ENCODE measurements at regions of chr5 and their contacts with region 1.

Region 1: DNA sequence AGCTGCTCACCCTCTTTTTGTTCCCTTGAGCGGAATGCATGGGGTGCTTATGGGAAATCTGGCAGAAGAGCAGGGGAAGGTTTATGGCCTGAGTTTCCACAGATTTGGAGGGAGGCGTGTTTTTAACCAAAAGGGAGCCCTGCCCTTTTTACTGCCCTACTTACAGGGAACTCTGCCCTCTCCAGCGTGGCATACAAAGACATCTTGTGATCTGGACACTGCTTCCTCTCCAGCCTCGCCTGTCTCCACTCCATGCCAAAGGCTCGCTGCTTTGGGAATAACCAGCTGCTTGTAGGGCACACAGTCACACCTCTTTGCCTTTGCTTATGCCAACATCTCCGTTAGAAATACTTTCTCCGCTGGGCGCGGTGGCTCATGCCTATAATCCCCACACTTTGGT is 314.2 kb downstream of the ARHGAP26 start:
- DNase-seq: no peak
- H3K4me3 ChIP-seq: no peak overlapping the region
- H3K27ac ChIP-seq: no peak overlapping the region
- H3K27me3 ChIP-seq: no peaks in the 10 kb centered on the region
- CTCF ChIP-seq: no peak

Region 2: DNA sequence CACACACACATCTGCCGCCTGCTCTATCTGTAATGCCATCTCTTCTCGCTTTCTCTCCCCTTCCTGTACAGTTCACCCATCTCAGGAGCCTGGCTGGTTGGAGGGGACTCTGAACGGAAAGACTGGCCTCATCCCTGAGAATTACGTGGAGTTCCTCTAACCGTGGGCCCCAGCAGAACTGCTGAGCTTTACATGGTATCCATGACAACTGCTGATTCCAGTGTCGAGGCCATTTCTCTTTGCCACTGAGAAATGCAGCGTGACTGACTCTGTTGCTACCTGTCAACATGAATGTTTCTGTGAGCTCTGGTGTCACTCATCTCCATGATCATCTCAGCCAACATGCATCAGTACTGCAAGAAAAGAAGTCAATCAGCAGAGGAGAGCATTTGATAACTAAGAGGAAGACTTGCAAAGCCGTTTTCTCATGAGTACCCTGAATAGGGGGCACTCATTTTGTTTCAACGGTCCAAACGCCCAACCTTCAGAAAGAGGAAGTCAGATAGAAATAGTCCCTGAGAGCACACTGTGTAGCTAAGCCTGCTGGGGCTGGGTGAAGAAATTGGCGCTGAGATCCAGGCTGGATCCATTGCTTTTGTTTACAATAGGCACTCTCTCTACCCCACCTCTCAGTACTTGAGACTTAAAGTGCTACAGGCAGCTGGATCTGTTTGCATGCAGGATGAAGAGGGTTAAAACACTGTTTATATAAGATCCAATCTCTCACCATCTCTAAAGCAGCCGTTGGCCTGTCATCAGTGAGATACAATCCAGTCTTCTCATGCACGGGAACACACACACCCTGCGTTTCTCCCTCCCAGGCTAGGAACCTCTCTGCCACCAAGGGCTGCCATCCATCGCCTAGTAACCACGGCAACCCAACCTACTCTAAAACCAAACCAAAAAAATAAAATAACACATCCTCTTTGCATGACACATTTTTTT is 138.2 kb after region 1 on chr5:
- CTCF ChIA-PET with region 1: no interaction called
- POLR2A ChIA-PET with region 1: interaction called, 14 read pairs
- DNase-seq: no peak
- H3K4me3 ChIP-seq: no peak overlapping the region
- H3K27ac ChIP-seq: no peak overlapping the region
- H3K27me3 ChIP-seq: no peaks in the 10 kb centered on the region
- CTCF ChIP-seq: no peak